Stomach (tissue), 19 donors: ENCODE measurements at regions of chr13 and their contacts with region 1.

Region 1: DNA sequence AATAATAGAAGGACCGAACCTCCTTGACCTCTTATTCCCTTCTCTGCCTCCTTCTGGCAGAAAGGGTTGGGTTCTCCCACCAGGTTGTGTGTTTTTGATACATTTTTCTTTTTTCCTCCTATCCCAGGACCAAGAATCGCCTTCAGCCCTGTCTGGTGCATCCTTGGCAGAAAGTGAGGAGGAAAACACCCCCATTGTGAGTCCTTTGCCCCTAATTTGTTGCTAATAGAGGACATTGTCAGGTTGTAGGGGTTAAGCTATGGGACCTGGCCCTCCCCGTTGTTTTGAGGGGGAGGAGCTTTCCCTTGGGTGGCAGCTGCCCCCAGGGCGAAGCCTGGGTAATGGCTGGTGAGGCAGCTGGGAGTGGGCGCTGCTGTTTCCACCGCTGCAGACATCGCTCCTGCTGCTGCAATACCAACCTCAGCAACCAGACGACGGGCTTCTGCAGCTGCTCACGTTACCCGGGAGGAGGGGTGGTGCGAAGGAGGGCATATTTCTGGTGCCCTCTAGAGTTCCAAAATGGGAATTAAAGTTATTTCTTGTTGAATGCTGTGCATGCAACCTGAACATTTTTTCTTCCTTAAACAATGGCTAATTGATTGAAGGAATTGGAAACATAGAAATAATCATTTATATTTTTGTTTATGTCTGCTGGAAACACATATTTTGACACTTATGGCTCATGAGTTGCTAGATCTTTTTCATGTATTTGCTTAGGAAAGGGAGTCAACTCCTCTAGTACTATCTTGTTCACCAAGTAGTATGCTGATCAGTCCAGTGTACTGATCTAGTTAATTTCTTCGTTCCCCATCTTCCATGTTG is 1.5 kb downstream of the ZMYM2 start:
- DNase-seq: peak; percentile 83 to 97
- H3K4me3 ChIP-seq: peak overlapping the region; percentile 81 to 89 (median 81)
- H3K27ac ChIP-seq: peak overlapping the region; percentile 97 to 100 (median 98)
- H3K4me1 ChIP-seq: peaks cover 18 to 61% (median 53%) of the 10 kb centered on the region in 4 donors
- H3K27me3 ChIP-seq: no peaks in the 10 kb centered on the region
- CTCF ChIP-seq: peak in 5 of 7 experiments; percentile 85 to 93 (median 92)
- EP300 ChIP-seq: no peak
- POLR2A ChIP-seq: no peak

Region 2: DNA sequence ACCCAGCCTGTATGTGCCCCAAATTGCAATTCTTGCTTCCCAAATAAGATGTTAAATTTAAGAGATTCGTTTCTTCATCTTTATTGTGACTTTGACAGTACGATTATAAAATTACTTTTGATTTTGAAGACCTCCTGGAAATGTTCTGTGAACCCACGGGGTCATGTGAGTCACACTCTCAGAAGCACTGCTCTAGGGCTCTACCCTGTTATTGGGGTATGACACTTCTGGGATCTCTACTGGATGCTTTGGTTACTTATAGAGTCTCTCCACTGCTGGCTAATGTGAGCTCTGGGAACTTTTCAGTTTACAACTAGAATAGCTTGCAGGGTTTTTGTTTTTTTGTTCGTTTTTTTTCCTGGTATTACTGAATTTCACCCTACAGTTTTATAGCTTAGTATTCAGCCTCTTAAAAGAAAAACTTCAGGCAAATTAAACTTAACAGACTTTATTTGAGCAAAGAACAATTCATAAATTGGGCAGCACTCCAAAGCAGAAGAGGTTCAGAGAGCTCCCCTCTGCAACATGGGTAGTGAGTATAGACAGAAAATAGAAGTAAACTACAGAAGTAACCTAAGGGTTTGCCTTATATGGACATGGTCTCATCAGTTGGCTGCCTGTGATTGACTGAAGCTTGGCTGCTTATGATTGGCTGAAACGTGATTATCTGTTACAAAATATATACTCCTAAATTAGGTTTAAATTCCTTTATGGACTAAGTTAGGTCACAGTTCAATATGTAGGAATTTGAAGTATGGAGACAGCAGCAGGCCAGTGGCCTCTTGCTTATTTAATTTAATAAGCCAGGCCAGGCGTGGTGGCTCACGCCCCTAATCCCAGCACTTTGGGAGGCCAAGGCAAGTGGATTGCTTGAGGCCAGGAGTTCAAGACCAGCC is 148.8 kb before region 1 on chr13:
- intact Hi-C with region 1: no loop called
- DNase-seq: no peak
- H3K4me3 ChIP-seq: no peak overlapping the region
- H3K27ac ChIP-seq: no peak overlapping the region
- H3K4me1 ChIP-seq: no peaks in the 10 kb centered on the region
- H3K27me3 ChIP-seq: no peaks in the 10 kb centered on the region
- CTCF ChIP-seq: no peak
- EP300 ChIP-seq: no peak
- POLR2A ChIP-seq: no peak

Region 3: DNA sequence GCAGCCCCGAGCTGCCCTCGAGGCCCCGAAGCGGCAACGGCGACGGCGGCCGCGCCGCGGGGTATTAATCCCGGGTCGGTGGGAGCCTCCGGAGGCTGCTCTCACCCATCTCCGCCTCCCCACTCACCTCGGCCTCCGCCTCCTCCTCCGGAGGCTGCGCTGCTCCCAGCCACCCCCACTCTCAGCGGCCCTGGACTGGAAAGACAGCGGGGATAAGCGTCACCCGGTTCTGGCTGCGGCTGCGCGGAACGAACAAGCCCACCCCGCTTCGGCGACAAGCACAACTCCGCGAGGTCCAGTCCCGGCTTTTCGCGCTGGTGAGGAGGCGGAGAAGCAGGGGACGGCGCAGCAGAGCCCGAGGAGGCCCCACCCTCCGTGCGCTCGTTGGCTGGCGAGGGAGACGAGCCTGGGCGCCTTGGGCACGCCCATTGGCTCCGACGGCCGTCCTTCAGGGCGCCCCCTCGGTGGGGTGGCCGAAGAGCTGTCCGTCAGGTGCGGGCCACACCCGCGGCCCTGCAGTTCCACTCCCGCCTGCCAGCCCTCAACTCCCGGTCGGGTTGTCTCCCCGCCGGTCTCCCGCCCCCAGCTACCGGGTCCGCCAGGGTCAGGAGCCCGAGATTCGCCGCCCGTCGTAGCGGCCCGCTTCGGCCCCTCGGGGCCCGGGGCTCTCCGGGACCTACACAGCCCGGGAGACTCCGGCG is 96.6 kb before region 1 on chr13 and contains the start of gene ZMYM5:
- intact Hi-C with region 1: loop called (anchors 10 kb)
- DNase-seq: peak; percentile 98 to 100
- H3K4me3 ChIP-seq: peak within 1 kb of the TSS; percentile 79 to 95 (median 89)
- H3K27ac ChIP-seq: peak within 1 kb of the TSS; percentile 95 to 100 (median 99)
- H3K4me1 ChIP-seq: peaks cover 22 to 40% (median 33%) of the 10 kb centered on the region in 4 donors
- H3K27me3 ChIP-seq: no peaks in the 10 kb centered on the region
- CTCF ChIP-seq: no peak
- EP300 ChIP-seq: no peak
- POLR2A ChIP-seq: peak in 2 of 4 donors; percentile 43 to 72
- total RNA-seq, gene ZMYM5: 4.9 to 67.4 (median 23.5) TPM

Region 4: GRCh38 chr13:20927596-20928257 is 967.7 kb after region 1 on chr13:
- intact Hi-C with region 1: no loop called
- DNase-seq: no peak
- H3K4me3 ChIP-seq: no peak overlapping the region
- H3K27ac ChIP-seq: no peak overlapping the region
- H3K4me1 ChIP-seq: no peaks in the 10 kb centered on the region
- H3K27me3 ChIP-seq: no peaks in the 10 kb centered on the region
- CTCF ChIP-seq: no peak
- EP300 ChIP-seq: no peak
- POLR2A ChIP-seq: no peak